Gastrocnemius medialis (tissue), 4 donors: ENCODE measurements at regions of chr14 and their contacts with region 1.

Region 1: DNA sequence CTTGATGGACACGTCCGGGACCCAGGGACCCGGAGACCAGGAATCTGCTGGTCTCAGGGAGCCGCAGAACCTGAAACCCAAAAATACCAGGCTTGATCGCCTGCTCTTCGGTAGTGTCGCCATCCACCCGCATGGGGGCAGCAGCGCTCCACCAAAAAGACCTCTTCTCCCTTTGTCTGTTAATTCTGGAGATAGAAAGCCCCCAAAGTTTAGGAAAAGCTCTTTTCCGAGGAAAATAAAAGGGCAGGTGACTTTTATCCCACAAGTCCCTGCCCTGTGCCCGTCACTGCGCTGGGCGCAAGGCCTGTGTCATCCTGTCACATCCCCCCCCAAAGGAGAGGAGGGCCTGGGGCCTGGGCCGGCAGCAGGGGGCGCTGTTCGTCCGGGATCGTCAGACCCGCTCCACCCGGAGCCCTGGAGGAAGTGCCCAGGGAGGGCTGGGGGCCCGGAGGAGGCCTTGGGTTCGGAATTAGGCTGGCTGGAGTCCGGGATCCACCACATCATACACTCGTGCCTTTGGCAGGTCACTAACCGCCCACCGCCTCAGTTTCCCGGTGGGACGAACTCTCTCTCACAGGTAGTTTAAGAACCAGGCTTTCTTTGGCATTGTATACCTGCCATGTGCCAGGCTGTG is 31.9 kb downstream of the DAD1 start:
- DNase-seq: peak; percentile 32 to 65
- ATAC-seq: peak; percentile 75 to 86
- H3K4me3 ChIP-seq: peak overlapping the region; percentile 31 to 62 (median 47)
- H3K27ac ChIP-seq: peak overlapping the region in 3 of 4 donors; percentile 56 to 60 (median 58)
- H3K4me1 ChIP-seq: peaks cover 9 to 17% of the 10 kb centered on the region in 2 donors
- H3K27me3 ChIP-seq: no peaks in the 10 kb centered on the region
- CTCF ChIP-seq: peak; percentile 97 to 100 (median 98)
- POLR2A ChIP-seq: no peak

Region 2: DNA sequence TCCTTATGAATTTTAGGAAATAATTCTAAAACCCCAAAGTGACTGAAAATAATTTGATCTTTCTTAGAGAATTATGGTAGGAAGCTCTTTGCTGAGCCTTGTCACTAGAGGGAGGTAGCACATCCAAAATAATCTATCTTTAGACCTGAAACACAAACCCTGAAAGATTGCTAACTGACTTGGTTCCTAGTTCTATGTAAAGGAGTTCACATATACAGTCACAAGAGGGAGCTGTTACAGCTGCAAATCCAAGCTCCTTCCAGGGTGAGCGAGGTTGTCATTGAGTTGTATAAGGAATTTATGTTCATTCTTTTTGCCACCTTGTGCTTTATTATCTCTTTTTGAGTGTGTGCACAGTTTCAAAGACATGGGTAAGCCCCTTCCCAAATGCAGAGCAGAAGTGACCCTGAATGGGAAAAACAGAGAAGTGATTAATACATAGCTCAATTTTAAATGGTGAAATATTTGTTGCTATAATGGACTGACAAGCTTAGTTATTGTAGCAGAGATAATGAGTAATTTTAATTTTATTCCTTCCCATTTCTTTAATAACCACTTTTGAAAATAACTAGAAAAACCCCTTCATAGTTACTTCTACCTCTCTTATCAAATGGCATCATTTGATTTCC is 356.0 kb before region 1 on chr14:
- in situ Hi-C with region 1: no loop called
- intact Hi-C with region 1: no loop called
- DNase-seq: no peak
- ATAC-seq: no peak
- H3K4me3 ChIP-seq: no peak overlapping the region
- H3K27ac ChIP-seq: no peak overlapping the region
- H3K4me1 ChIP-seq: no peaks in the 10 kb centered on the region
- H3K27me3 ChIP-seq: no peaks in the 10 kb centered on the region
- CTCF ChIP-seq: no peak
- POLR2A ChIP-seq: no peak

Region 3: GRCh38 chr14:22291406-22291805 is 265.7 kb before region 1 on chr14:
- in situ Hi-C with region 1: no loop called
- intact Hi-C with region 1: no loop called
- DNase-seq: no peak
- ATAC-seq: no peak
- H3K4me3 ChIP-seq: no peak overlapping the region
- H3K27ac ChIP-seq: no peak overlapping the region
- H3K4me1 ChIP-seq: no peaks in the 10 kb centered on the region
- H3K27me3 ChIP-seq: no peaks in the 10 kb centered on the region
- CTCF ChIP-seq: no peak
- POLR2A ChIP-seq: no peak

Region 4: GRCh38 chr14:22646570-22647254 is 89.6 kb after region 1 on chr14:
- in situ Hi-C with region 1: loop called in 1 of 4 experiments (anchors 10 kb)
- intact Hi-C with region 1: no loop called
- DNase-seq: no peak
- ATAC-seq: no peak
- H3K4me3 ChIP-seq: no peak overlapping the region
- H3K27ac ChIP-seq: no peak overlapping the region
- H3K4me1 ChIP-seq: peaks cover 0 to 4% of the 10 kb centered on the region in 2 donors
- H3K27me3 ChIP-seq: no peaks in the 10 kb centered on the region
- CTCF ChIP-seq: no peak
- POLR2A ChIP-seq: no peak

Region 5: DNA sequence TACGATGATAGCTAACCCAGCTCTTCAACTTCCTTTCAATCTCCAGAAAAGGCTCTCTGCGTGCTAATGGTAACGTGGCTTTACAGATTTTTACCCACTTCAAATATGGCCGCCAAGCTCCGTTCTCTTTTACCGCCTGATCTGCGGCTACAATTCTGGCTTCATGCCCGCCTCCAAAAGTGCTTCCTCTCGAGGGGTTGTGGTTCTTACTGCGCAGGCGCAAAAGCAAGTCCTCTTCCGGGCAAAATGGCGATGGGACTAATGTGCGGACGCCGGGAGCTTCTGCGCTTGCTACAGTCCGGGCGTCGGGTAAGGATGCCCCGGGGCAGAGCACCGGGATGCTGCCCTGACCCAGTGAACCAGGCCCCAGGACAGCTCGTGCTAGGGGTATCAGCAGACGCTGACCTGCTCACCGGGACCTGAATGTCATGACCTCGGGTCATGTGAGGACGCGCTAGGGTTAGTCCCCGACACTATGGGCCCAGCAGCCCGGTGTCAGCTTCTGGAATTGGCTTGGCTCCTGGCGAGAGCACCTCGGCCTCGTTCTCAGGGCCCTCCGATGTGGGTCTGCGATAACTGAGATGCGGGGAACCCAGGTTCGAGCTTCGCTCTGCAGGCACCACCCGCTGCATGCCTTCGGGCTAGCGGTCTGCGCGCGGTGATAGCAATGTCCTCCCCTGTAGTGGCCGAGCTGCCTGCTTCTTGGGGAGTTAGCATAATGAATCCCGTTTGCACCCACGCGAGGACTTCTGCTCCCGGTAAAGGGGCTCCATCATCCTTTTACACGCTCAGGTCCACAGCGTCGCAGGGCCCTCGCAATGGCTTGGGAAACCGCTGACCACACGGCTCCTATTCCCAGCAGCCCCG is 209.6 kb after region 1 on chr14 and contains the start of gene OXA1L:
- in situ Hi-C with region 1: no loop called
- intact Hi-C with region 1: loop called (anchors 5 kb)
- DNase-seq: peak; percentile 97 to 98
- ATAC-seq: peak; percentile 98 to 99
- H3K4me3 ChIP-seq: peak within 1 kb of the TSS; percentile 73 to 96 (median 84)
- H3K27ac ChIP-seq: peak within 1 kb of the TSS; percentile 84 to 94 (median 92)
- H3K4me1 ChIP-seq: peaks cover 16 to 19% of the 10 kb centered on the region in 2 donors
- H3K27me3 ChIP-seq: no peaks in the 10 kb centered on the region
- CTCF ChIP-seq: no peak
- POLR2A ChIP-seq: peak; percentile 52 to 65
- total RNA-seq, gene OXA1L: 83.5 to 135 (median 114) TPM

Region 6: DNA sequence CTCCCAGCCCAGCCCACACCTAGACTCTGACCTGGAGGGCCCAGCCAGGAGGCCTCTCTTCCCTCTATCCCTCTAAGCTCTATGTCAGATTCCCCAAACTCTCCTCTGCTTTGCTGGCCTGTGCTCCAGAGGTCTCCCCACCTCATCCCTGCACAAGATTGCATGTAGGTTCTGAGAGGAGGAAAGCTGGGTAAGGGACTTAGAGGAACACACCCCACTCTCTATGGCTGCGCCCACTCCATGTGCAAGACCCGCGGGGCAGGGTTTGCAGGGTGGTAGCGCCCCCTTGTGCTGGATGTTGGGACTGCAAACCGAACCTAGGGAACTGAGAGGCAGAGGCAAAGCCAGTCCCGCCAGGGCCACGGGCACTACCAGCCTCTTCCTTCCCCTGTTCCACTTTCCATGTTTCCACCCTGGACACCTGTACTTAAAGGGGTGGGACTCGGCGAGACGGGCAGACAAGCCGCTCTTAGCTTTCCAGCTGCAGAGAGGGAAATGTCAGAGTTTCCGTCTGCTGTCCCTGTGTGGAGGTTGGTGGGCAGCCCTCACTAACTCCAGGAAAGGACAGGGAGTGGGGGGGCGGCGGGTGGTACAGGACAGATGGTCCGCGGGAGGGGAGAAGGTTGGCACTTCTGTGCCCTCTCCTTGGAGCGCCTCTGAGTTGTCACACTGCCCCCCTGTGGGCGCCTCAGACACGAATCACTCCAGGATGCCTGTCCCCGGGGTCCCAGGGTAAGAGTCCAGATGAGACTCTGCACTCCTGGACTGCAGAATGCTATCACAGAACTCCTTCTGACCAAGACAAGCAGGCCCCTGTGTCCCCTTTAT is 296.0 kb after region 1 on chr14:
- in situ Hi-C with region 1: loop called (anchors 10 to 25 kb)
- intact Hi-C with region 1: loop called (anchors 1 kb)
- DNase-seq: peak; percentile 52 to 80
- ATAC-seq: peak; percentile 60 to 66
- H3K4me3 ChIP-seq: peak overlapping the region; percentile 43 to 56 (median 50)
- H3K27ac ChIP-seq: peak overlapping the region in 1 of 4 donors; percentile 32
- H3K4me1 ChIP-seq: peaks cover 40% of the 10 kb centered on the region in 2 donors
- H3K27me3 ChIP-seq: no peaks in the 10 kb centered on the region
- CTCF ChIP-seq: peak; percentile 90 to 98 (median 94)
- POLR2A ChIP-seq: no peak

Region 7: DNA sequence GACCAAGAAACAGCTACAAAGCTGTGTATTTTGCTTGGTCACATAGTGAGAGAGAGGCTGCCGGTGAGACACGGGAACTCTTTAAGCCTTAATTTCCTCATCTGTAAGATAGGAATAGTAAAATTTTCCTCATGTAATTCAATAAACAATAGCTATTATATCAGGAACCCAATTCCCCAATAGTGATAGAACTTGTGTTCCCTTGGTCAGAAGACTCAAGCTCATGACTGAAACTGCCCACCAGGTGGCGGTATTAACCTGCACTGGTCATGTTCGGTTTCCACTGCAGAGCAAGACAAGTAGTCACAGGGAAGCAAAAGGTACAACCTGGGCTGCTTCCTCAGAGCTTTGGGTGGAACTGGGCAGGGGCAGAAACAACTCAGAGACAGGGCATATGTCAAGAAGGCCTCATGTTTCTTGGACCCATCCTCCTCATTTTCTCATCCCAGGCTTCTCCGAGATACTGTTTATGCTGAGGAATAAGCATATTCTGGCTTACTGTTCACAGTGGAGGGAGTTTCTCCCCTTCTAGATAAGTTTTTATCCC is 429.5 kb after region 1 on chr14:
- in situ Hi-C with region 1: no loop called
- intact Hi-C with region 1: loop called (anchors 2 kb)
- DNase-seq: peak; percentile 76 to 80
- ATAC-seq: peak; percentile 83 to 84
- H3K4me3 ChIP-seq: no peak overlapping the region
- H3K27ac ChIP-seq: no peak overlapping the region
- H3K4me1 ChIP-seq: peaks cover 3 to 20% of the 10 kb centered on the region in 2 donors
- H3K27me3 ChIP-seq: peaks cover 9 to 18% (median 17%) of the 10 kb centered on the region in 3 donors
- CTCF ChIP-seq: peak; percentile 76 to 94 (median 84)
- POLR2A ChIP-seq: no peak